ENCODE measurements at regions of chr19 and their contacts with region 1.

Region 1: GRCh38 chr19:6737284-6738046 is at the start of gene GPR108:
- DNase-seq: peak; percentile 100
- H3K4me3 Mint-ChIP-seq: peak within 1 kb of the TSS; percentile 98
- H3K27ac Mint-ChIP-seq: peak within 1 kb of the TSS; percentile 98
- H3K4me1 Mint-ChIP-seq: peaks cover 34% of the 10 kb centered on the region
- H3K27me3 Mint-ChIP-seq: no peaks in the 10 kb centered on the region
- total RNA-seq, gene GPR108: 72.1 to 75.4 TPM

Region 2: DNA sequence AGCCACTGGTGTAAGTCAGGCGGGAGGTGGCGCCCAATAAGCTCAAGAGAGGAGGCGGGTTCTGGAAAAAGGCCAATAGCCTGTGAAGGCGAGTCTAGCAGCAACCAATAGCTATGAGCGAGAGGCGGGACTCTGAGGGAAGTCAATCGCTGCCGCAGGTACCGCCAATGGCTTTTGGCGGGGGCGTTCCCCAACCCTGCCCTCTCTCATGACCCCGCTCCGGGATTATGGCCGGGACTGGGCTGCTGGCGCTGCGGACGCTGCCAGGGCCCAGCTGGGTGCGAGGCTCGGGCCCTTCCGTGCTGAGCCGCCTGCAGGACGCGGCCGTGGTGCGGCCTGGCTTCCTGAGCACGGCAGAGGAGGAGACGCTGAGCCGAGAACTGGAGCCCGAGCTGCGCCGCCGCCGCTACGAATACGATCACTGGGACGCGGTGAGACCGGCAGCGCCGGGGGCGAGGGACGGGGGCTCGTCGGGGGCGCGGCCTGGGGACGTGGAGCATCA is 364.8 kb before region 1 on chr19 and contains the start of gene ALKBH7:
- CTCF ChIA-PET with region 1: no interaction called
- POLR2A ChIA-PET with region 1: no interaction called
- intact Hi-C with region 1: loop called (anchors 10 kb)
- DNase-seq: peak; percentile 98
- H3K4me3 Mint-ChIP-seq: peak within 1 kb of the TSS; percentile 80
- H3K27ac Mint-ChIP-seq: peak within 1 kb of the TSS; percentile 88
- H3K4me1 Mint-ChIP-seq: peaks cover 11% of the 10 kb centered on the region
- H3K27me3 Mint-ChIP-seq: no peaks in the 10 kb centered on the region
- total RNA-seq, gene ALKBH7: 57.6 to 58.5 TPM

Region 3: GRCh38 chr19:6632002-6632621 is 105.4 kb before region 1 on chr19:
- CTCF ChIA-PET with region 1: interaction called, 62 read pairs
- POLR2A ChIA-PET with region 1: no interaction called
- intact Hi-C with region 1: loop called (anchors 1 kb)
- DNase-seq: peak; percentile 80
- H3K4me3 Mint-ChIP-seq: no peak overlapping the region
- H3K27ac Mint-ChIP-seq: no peak overlapping the region
- H3K4me1 Mint-ChIP-seq: peaks cover 26% of the 10 kb centered on the region
- H3K27me3 Mint-ChIP-seq: peaks cover 4% of the 10 kb centered on the region

Region 4: GRCh38 chr19:6767357-6768235 is 30.1 kb after region 1 on chr19 and contains the start of gene SH2D3A:
- CTCF ChIA-PET with region 1: interaction called, 51 read pairs
- POLR2A ChIA-PET with region 1: interaction called, 6 read pairs
- intact Hi-C with region 1: loop called (anchors 1 kb)
- DNase-seq: peak; percentile 97
- H3K4me3 Mint-ChIP-seq: peak within 1 kb of the TSS; percentile 85
- H3K27ac Mint-ChIP-seq: peak within 1 kb of the TSS; percentile 92
- H3K4me1 Mint-ChIP-seq: peaks cover 39% of the 10 kb centered on the region
- H3K27me3 Mint-ChIP-seq: no peaks in the 10 kb centered on the region
- total RNA-seq, gene SH2D3A: 17.1 to 18.2 TPM

Region 5: DNA sequence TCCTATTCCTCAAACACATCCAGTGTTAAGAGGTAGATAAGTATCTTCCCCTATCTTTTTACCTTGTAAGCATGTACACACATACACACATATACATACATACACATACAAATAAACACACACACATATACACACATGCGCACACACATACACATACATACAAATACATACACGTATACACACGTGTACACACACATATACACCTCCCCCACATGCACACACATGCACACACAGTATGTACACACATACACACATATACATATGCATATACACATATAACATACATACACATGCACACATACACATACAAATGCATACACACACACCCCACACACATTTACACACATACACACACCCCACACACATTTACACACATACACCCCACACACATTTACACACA is 174.1 kb after region 1 on chr19:
- CTCF ChIA-PET with region 1: no interaction called
- POLR2A ChIA-PET with region 1: no interaction called
- intact Hi-C with region 1: no loop called
- DNase-seq: no peak
- H3K4me3 Mint-ChIP-seq: no peak overlapping the region
- H3K27ac Mint-ChIP-seq: no peak overlapping the region
- H3K4me1 Mint-ChIP-seq: no peaks in the 10 kb centered on the region
- H3K27me3 Mint-ChIP-seq: no peaks in the 10 kb centered on the region

Region 6: GRCh38 chr19:6947745-6948144 is 210.3 kb after region 1 on chr19:
- CTCF ChIA-PET with region 1: no interaction called
- POLR2A ChIA-PET with region 1: no interaction called
- intact Hi-C with region 1: loop called (anchors 5 kb)
- DNase-seq: peak; percentile 85
- H3K4me3 Mint-ChIP-seq: no peak overlapping the region
- H3K27ac Mint-ChIP-seq: peak overlapping the region; percentile 33
- H3K4me1 Mint-ChIP-seq: peaks cover 17% of the 10 kb centered on the region
- H3K27me3 Mint-ChIP-seq: no peaks in the 10 kb centered on the region

Region 7: DNA sequence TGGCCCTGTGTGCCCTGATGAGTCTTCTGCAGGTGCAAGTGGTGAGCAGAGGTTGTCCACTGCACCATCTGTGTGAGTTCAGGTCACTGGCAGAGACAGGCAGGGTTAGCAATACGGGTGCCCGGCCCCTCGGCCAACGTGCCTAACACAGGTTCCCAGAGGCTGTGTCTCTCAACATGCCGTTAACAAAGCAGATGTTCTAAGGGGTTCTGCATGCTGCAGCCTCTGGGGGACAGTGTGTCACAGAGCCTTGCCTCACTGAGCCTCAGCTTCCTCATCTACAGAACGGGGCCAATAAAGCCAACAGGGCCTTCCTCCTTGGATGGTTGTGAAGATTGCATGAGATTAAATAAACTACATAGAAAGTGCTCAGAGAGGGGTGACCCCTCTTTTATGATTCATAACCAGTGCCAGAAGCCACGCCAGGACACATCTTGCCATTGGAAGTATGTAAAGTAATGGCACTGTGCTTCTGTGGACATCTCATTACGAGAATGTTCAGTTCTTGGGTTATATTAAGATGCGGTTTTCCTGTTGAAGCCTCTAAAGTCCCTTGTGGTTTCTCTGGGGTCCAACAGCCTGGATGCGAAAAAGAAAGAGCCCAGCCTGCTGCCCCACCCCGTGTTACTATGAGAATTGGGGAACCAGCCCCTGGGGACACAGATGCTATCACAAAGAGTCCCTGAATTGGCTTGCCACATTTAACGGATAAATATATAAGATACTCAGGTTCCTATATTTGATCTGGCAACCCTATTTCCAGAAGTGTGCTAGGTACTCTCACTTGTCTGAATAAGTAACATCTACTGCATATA is 600.1 kb after region 1 on chr19:
- CTCF ChIA-PET with region 1: no interaction called
- POLR2A ChIA-PET with region 1: no interaction called
- intact Hi-C with region 1: no loop called
- DNase-seq: peak; percentile 48
- H3K4me3 Mint-ChIP-seq: no peak overlapping the region
- H3K27ac Mint-ChIP-seq: no peak overlapping the region
- H3K4me1 Mint-ChIP-seq: peaks cover 19% of the 10 kb centered on the region
- H3K27me3 Mint-ChIP-seq: no peaks in the 10 kb centered on the region